Thyroid gland (tissue), 4 donors: ENCODE measurements at regions of chr2 and their contacts with region 1.

Region 1: GRCh38 chr2:224284134-224284946 is 117.6 kb downstream of the FAM124B start:
- DNase-seq: no peak
- H3K4me3 ChIP-seq: no peak overlapping the region
- H3K27ac ChIP-seq: no peak overlapping the region
- H3K4me1 ChIP-seq: no peaks in the 10 kb centered on the region
- H3K27me3 ChIP-seq: no peaks in the 10 kb centered on the region
- CTCF ChIP-seq: peak; percentile 43 to 88 (median 54)
- POLR2A ChIP-seq: no peak

Region 2: GRCh38 chr2:223970343-223971128 is 313.8 kb before region 1 on chr2:
- intact Hi-C with region 1: loop called (anchors 5 kb)
- DNase-seq: peak; percentile 32 to 33
- H3K4me3 ChIP-seq: no peak overlapping the region
- H3K27ac ChIP-seq: no peak overlapping the region
- H3K4me1 ChIP-seq: no peaks in the 10 kb centered on the region
- H3K27me3 ChIP-seq: no peaks in the 10 kb centered on the region
- CTCF ChIP-seq: peak; percentile 84 to 96 (median 92)
- POLR2A ChIP-seq: no peak

Region 3: GRCh38 chr2:223995569-223995968 is 288.8 kb before region 1 on chr2:
- intact Hi-C with region 1: loop called (anchors 5 kb)
- DNase-seq: no peak
- H3K4me3 ChIP-seq: no peak overlapping the region
- H3K27ac ChIP-seq: no peak overlapping the region
- H3K4me1 ChIP-seq: peaks cover 0 to 6% of the 10 kb centered on the region in 2 donors
- H3K27me3 ChIP-seq: no peaks in the 10 kb centered on the region
- CTCF ChIP-seq: no peak
- POLR2A ChIP-seq: no peak